Left ventricle myocardium superior (tissue), 1 donor: ENCODE measurements at regions of chrX and their contacts with region 1.

Region 1: GRCh38 chrX:151082076-151082948 is 94.1 kb upstream of the GPR50 start:
- DNase-seq: peak; percentile 75
- ATAC-seq: peak; percentile 91

Region 2: DNA sequence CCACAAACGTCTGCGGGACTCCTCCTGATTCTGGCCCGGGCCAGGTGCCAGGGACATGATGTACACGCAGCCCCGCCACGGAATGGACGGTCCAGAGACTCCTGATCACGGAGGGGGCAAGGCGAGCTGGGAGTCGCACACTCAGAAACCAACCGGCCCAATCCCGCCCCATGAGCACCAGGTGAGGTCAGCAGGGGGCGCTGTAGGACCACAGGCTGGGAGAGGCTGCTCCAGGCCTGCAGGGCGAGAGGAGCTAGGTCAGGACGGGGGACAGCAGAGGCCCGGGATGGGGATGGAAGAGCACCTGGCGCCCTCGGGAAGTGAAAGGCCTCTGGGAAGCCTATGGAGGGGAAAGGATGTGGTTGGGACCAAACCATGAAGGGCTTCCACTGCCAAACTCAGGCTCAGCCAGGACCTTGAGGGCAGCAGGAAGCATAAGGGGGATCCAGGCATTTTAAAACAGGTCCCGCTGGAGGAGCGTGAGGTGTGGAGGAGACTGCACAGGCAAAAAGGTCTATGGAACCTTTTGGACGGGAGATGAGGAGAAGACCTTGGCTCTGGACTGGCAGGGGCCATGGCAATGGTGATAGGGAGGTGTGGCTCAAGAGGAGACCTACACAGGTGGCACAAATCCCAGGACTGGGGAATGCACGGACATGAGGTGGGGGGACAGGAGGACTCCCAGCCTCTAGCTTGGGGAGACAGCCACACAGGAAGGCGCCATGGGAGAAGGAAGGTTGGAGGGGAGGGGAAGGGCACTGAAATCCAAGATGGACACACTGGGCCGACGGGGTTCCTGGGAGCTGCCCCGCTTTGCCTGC is 310.0 kb before region 1 on chrX:
- intact Hi-C with region 1: loop called (anchors 5 kb)
- DNase-seq: peak; percentile 87
- ATAC-seq: peak; percentile 89

Region 3: DNA sequence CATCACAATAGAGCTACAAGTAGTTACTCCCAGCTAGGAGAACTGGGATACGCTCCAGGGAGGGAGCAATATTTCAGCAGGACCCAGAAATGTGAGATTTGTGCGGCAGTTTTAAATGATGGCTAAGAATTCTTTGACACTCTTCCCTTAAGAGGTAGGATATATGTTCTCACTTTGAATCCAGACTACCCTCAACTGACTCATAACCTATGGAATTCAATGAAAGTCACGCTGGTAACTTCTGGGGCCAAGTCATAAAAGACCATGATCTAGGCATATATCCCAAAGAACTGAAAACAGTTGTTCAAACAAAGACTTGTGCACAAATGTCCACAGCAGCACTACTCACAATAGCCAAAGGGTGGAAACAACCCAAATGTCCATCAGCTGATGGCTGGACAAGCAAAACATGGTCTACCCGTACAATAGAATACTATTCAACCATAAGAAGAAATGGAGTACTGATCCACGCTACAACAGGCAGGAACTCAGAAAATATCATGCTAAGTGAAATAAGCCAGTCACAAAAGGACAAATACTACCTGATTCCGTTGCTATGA is 194.3 kb before region 1 on chrX:
- intact Hi-C with region 1: no loop called
- DNase-seq: no peak
- ATAC-seq: no peak

Region 4: GRCh38 chrX:150926304-150926703 is 156.0 kb before region 1 on chrX:
- intact Hi-C with region 1: no loop called
- DNase-seq: no peak
- ATAC-seq: no peak

Region 5: DNA sequence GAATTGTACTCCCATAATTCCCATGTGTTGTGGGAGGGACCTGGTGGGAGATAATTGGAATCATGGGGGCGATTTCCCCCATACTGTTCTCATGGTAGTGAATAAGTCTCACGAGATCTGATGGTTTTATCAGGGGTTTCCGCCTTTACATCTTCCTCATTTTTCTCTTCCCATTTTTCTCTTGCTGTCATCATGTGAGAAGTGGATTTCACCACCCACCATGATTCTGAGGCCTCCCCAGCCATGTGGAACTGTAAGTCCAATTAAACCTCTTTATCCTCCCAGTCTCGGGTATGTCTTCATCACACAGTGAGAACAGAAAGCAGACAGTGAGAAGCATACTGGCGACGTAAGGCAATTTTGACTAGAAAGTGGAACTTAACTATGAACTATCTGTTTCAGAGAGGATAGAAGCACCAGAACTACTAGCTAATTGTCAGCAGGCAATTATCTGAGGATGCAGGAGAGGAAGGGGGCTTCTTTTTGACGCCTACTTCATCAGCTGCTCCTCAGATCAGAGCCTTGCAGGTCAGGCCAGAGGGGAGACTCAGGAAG is 85.6 kb after region 1 on chrX:
- intact Hi-C with region 1: no loop called
- DNase-seq: no peak
- ATAC-seq: no peak

Region 6: GRCh38 chrX:151516538-151517187 is 434.4 kb after region 1 on chrX:
- intact Hi-C with region 1: no loop called
- DNase-seq: no peak
- ATAC-seq: no peak